ENCODE measurements at regions of chr9 and their contacts with region 1.

Region 1: DNA sequence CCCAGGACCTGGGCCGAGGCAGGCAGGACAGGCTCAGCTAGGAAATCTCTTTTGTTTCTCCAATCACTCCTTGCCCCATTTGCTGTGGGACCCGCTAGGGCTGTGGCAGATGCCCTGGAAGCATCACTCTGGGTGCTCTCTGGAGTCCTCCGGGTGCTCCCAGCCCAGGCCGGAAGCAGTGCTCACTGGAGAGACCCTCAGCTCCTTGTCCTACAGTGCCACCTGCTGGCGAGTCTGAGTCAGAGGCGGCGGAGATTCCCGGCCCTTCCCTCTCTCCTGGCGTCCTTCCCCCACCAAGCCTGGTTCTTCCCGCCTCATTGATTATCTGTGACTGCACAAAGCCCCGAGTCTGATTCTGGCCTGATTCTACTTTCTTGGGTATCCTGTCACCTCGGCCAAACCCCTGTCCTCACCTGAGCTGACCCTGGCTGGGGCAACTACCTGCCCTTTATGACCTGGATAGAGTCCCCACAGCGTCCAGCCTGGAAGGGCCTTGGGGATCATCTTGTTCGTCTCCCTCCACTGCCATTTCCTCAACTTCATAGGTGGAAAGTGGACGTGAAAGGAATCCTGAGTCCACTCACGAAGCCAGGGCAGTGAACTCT is 7.3 kb upstream of the BARHL1 start:
- DNase-seq: peak; percentile 9
- H3K4me3 ChIP-seq: no peak overlapping the region
- CTCF ChIP-seq: peak; percentile 92

Region 2: GRCh38 chr9:132412089-132412488 is 163.0 kb before region 1 on chr9:
- CTCF ChIA-PET with region 1: interaction called, 37 read pairs
- POLR2A ChIA-PET with region 1: no interaction called
- DNase-seq: no peak
- H3K4me3 ChIP-seq: no peak overlapping the region
- CTCF ChIP-seq: peak; percentile 53

Region 3: DNA sequence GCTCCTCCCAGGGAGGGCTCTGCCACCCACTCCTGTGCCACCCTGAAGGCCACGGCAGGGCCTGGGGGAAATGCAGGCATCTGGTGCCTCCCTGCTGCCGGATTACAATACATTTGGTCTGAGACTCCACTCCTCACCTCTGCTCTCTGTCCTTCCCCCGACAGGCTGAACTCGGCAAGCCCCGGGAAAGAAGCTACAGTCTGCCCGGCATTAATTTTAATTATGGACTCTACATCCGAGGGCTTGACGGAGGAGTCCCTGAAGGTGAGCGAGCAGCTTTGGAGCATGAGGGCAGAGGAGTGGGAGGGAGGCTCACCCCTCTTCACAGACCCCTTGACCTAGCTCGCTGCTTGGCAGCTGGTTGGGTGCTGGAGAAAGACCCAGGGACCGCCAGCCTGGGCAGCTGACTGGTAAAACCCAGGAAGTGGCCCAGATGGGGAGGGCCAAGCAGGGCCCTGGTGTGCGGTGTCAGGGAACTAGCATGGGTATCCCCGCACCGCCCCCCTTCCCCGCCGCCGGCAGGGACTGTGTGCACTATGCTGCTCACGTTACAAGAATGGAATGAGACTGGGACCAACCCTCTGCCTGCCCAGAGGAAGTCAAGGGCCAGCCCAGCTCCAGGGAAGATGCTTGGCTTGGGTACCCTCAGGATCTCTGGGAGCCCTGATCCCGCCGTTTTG is 76.4 kb before region 1 on chr9:
- CTCF ChIA-PET with region 1: interaction called, 87 read pairs
- POLR2A ChIA-PET with region 1: no interaction called
- DNase-seq: no peak
- H3K4me3 ChIP-seq: no peak overlapping the region
- CTCF ChIP-seq: no peak

Region 4: DNA sequence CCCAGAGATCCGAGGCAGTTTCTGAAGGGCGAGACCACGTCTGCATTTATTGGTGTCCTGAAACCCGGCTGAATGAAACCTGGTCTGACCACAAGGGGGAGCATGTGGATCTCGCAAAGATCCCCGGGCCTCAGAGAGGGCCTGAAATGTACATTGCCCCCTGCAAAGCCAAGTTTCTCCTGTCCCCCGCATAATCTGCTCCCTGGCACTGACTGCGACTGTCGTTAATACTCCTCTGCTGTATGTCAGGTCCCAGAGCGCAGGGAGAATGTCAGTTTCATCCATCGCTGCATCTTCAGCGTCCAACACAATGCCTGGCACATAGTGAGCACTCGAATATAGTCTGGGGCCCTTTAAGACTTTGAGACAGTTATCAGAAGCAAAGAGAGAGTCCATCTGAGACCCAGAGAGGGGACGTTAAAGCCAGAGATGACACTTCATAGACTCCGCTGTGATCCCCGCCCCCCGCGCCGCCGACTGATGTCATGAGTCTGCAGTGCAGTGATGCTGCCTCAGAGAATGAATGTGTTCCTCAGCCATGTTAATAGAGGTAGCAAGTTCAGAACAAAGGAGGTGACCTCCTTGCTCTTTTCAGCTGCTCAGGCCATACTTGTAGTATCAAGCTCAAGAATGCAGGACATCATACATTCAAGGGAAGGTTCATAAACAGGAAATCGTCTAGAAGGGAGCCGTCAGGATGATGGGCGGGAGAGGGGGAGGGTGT is 67.2 kb before region 1 on chr9:
- CTCF ChIA-PET with region 1: interaction called, 87 read pairs
- POLR2A ChIA-PET with region 1: no interaction called
- DNase-seq: no peak
- H3K4me3 ChIP-seq: no peak overlapping the region
- CTCF ChIP-seq: peak; percentile 83

Region 5: DNA sequence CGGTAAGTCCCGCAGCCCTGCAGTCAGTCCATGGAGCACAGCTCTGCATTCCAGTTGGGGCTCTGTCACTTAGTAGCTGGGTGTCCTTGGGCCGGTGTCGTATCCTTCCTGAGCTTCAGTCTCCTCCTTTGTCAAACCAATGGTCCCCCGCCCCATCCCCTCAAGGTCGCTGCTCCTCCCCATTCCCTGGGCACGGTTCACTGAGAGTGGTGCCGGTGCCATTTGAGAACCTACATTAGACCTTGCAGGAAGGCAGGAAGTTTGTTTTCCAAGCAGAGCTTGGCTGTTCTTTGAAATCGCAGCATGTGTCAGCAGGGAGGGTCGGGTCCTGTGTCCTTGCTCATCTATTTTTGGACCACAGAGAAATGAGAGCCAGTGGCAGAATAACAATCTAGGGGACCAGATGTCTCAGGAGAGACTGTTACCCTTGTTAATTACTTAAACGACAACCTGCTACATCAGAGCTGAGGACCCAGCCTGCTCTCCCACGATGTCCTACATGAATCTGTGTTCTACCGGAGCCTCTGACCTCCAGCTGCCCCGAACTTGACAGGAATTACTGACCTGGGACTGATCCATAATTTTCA is 14.4 kb before region 1 on chr9:
- CTCF ChIA-PET with region 1: interaction called, 10 read pairs
- POLR2A ChIA-PET with region 1: no interaction called
- DNase-seq: no peak
- H3K4me3 ChIP-seq: no peak overlapping the region
- CTCF ChIP-seq: no peak

Region 6: DNA sequence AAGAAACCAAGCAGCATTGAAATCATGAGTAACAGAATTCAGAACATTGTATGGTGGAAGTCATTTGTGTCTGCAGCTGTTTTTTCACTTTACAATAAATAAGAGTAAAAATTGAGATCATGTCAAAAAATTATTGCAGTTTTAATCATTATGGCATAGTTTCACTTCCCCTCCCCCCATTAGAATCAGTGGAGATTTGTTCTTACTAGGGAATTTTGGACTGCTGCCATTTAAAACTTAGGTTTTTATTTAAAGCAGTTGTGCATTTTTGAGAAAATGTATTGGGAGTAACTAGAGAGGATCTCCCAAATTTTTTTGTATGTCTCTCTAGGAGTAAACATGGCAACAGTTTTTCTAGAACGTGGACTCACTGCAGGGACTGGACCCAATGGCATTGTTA is 115.6 kb after region 1 on chr9:
- CTCF ChIA-PET with region 1: no interaction called
- POLR2A ChIA-PET with region 1: no interaction called
- DNase-seq: no peak
- H3K4me3 ChIP-seq: no peak overlapping the region
- CTCF ChIP-seq: no peak